ENCODE measurements at regions of chr12 and their contacts with region 1.

Region 1: DNA sequence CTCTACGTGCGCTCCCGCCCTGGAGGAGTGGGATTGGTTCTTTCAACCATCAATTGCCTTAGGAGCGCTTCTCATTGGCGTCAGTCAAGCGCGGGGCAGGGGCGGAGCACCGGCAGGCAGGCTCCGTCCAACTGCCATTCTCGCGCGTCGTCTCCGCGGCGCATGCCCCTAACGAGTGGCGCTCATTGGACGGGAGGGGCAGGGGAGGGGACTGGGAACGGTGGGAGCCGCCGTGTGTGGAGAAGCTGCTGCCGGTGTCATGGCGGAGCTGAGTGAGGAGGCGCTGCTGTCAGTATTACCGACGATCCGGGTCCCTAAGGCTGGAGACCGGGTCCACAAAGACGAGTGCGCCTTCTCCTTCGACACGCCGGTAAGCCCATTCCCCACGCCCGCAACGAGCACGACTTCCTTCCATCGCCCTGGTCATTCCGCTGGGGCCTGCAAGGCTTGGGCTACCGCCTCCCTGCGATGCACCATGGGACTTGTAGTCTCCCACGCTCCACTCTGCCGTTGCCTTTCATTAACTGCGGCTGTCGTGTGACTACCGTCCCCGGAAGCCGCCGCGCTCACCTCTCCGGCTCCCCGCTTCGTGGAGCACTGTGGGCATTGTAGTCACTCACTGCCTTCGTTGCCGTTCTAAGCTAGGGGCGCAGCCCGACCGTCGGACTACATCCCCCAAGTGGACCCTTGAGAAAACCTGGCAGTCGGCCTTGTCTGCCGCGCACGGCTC is at the start of gene USP5:
- DNase-seq: peak; percentile 91
- ATAC-seq: peak; percentile 78
- H3K4me3 Mint-ChIP-seq: peak within 1 kb of the TSS; percentile 100
- H3K27ac Mint-ChIP-seq: peak within 1 kb of the TSS; percentile 99
- H3K4me1 Mint-ChIP-seq: peaks cover 30% of the 10 kb centered on the region
- H3K27me3 Mint-ChIP-seq: no peaks in the 10 kb centered on the region
- CTCF ChIP-seq: no peak
- total RNA-seq, gene USP5: 108 and 110 TPM in 2 replicates

Region 2: DNA sequence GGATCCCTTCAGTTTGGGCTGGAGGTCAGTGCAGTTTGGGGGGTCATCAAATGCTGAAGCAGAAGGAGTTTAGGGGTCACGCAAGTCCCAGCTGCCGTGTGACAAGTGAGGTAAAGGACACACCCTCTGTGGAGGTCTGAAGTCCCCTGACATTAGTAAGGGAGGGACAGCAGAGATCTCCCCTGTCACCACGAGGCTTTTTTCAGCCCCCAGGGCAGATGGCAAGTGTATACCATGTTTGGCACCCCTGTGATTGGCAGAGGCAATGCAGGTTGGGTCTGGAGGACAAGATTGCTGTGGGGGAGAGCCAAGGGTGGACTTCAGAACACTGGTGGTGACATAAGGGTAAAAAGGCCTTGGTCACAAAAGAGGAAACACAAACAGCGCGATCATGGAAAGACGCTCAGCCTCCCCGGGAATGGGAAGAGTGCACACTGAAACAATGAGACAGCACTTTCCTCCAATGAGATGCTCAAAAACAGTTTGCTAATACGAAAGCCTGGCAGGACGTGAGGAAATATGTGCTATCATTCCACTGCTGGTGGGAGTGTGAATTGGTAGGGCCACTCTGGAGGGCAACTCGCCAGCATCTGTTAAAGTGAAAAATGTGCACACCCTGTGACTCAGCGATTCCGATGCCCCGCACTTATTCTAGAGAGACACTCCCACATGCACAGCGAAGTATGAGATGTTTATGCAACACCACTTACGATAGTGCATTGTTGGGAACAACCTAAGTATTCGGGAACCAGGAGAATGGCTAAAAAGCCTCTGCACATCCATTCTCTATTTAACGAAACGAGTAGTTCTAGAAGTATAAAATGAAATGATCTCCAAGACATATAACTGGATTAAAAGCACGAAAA is 421.7 kb before region 1 on chr12:
- CTCF ChIA-PET with region 1: no interaction called
- POLR2A ChIA-PET with region 1: no interaction called
- intact Hi-C with region 1: loop called (anchors 5 kb)
- DNase-seq: no peak
- ATAC-seq: no peak
- H3K4me3 Mint-ChIP-seq: peak overlapping the region; percentile 58
- H3K27ac Mint-ChIP-seq: peak overlapping the region; percentile 65
- H3K4me1 Mint-ChIP-seq: peaks cover 72% of the 10 kb centered on the region
- H3K27me3 Mint-ChIP-seq: no peaks in the 10 kb centered on the region
- CTCF ChIP-seq: no peak

Region 3: DNA sequence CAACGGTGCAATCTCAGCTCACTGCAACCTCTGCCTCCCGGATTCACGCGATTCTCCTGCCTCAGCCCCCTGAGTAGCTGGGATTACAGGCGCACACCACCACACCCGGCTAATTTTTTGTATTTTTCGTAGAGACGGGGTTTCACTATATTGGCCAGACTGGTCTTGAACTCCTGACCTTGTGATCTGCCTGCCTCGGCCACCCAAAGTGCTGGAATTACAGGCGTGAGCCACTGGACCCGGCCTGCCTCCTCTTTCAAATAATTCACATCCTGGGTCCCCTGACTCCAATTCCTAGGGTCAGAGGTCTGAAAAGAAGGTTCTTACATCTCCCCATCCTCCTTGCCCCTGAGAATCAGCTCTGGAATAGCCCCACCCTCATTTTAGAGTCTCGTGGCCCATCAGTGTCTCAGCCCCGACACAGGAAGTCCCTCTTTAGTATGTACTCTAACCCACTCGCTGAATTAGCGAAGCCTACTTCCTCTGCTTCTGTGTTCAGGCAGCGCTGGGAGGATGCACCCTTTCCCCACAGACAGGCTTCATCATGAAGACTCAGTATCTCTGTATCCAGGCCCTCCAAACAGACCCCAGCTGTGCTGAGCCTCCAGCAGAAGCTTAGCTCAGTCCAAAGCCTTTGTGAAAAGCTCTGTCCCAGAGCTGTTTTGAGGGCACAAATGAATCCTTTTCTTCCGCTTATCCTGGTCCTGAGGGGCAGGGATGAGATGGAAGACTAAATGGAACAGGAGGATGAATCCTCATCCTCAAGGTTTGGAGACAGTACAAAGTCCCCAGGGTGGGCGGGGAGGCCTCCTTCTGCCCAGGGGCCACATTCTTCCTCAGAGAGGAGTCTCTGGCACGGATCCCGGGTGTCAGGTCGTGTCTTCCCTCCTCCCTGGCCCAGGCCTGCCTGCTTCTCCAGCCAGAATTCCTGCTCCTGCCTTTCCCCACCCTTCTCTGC is 219.8 kb before region 1 on chr12:
- CTCF ChIA-PET with region 1: no interaction called
- POLR2A ChIA-PET with region 1: interaction called, 9 read pairs
- intact Hi-C with region 1: loop called (anchors 5 kb)
- DNase-seq: peak; percentile 51
- ATAC-seq: peak; percentile 53
- H3K4me3 Mint-ChIP-seq: peak overlapping the region; percentile 86
- H3K27ac Mint-ChIP-seq: peak overlapping the region; percentile 98
- H3K4me1 Mint-ChIP-seq: peaks cover 84% of the 10 kb centered on the region
- H3K27me3 Mint-ChIP-seq: no peaks in the 10 kb centered on the region
- CTCF ChIP-seq: no peak

Region 4: DNA sequence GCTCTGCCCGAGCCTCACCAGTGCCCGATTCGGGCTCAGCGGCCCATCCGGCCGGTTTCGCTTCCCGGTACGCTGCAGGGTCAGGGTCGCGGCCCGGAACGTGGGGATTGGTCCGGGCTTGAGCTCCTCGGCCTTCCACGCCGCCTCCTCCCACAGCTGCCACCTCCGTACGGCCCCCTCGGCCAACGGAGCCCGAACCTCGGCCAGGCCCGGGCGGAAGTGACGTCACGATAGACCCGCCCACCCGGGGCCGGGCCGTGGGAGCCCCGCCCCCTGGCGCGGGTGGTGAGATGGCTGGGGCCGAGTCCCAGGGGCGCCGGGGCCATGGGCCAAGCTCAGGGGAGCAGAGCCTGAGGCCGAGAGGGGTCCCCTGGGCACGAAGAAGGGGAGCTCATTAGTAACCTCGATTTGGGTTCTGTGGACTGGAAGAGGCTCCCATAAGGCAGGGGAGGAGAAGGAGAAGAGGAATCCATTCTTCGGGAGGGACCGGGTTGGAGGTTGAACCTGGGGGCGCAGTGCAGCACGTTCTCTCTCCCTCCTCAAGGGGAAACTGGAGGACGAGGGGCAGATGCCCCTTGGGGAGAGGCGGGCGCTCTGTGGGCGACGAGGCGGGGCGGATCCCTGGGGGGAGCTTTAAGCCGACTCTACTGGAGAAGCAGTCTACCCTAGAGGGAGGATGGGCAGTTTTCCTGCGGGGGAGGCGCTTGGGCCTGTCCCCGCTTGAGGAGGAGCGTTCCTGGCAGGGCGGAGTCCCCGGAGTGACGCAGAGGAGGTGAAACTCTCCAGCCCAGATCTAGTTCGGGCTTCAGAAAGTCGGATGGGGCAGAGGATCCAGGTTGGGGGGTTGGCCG is 98.9 kb before region 1 on chr12 and contains the start of gene MLF2:
- CTCF ChIA-PET with region 1: interaction called, 4 read pairs
- POLR2A ChIA-PET with region 1: interaction called, 38 read pairs
- intact Hi-C with region 1: loop called (anchors 1 kb)
- DNase-seq: peak; percentile 98
- ATAC-seq: peak; percentile 91
- H3K4me3 Mint-ChIP-seq: peak within 1 kb of the TSS; percentile 93
- H3K27ac Mint-ChIP-seq: peak within 1 kb of the TSS; percentile 99
- H3K4me1 Mint-ChIP-seq: peaks cover 16% of the 10 kb centered on the region
- H3K27me3 Mint-ChIP-seq: no peaks in the 10 kb centered on the region
- CTCF ChIP-seq: peak; percentile 76
- total RNA-seq, gene MLF2: 102 and 105 TPM in 2 replicates

Region 5: DNA sequence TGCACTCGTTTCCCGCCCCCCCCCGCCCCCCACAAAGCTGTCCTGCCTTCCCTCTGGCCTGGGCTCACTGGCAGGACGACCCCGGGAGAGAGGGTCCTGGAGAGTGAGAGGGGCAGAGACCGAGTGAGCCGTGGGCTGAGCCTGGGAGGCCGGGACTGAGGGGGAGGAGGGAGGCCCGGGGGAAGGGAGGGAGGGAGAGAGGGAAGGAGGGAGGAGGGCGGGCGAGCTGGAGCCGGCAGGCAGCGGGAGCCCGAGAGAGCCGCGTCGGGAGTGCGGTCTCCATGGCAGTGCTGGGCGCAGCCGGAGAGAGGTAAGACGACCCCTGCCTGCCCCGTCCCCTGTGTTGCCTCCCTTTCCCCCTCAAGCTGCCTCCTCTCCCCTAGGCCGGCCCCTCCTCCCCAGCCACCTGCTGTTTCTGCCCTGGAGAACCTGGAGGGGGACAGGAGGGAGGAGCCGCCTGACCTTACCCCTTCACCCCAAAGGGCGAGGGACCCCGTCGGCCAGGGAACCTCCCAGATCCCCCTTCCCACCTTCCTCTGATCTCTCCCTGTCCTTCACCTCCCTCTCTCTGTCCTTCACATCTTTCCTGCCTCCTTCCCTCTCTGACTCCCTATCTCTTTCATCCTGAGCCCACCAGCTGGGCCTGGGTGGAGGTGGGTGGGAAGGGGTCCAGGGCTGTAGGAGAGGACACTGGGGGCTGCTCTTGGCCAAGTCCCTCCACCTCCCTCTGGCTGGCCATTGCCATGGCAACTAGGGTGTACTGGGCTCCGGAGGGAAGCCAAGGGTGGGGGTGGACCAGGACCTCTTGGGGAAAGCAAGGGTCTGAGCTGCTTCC is 30.3 kb before region 1 on chr12 and contains the start of gene GPR162:
- CTCF ChIA-PET with region 1: no interaction called
- POLR2A ChIA-PET with region 1: no interaction called
- intact Hi-C with region 1: no loop called
- DNase-seq: no peak
- ATAC-seq: no peak
- H3K4me3 Mint-ChIP-seq: no peak within 1 kb of the TSS
- H3K27ac Mint-ChIP-seq: no peak within 1 kb of the TSS
- H3K4me1 Mint-ChIP-seq: peaks cover 16% of the 10 kb centered on the region
- H3K27me3 Mint-ChIP-seq: peaks cover 54% of the 10 kb centered on the region
- CTCF ChIP-seq: no peak
- total RNA-seq, gene GPR162: not detected in 2 replicates

Region 6: DNA sequence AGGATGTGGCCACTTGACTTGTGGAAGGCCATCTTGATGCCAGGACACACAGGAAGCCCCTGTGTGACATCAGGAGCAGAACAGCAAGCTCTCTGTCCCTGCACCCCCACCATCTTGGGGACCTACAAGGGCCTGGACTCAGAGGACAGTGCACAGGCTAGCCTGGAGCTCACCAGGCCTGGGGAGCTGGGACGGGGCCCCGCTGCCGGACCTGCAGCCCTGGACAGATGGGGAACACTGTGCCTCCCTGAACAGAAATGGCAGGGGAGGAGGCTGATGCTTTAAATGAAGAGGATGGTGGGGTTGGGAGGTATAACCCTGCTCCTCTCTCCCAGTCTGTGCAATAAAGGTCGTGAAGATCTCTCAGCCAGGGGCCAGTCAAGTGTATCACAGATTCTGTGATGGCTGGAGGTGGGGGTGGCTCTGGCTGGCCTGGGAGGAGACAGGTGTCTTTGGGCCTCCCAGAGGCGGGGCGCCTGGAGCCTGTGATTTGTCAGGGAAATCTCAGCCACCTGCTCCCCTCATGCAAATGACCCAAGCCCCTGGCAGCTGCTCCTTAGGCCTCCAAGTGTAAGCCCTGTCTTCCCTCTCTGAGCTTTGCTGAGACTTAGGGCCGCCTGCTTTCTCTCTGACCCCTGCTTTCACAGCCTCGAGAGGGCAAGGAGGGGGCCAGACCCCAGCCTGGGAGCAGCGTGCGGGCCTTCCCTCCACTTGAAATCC is 12.4 kb before region 1 on chr12:
- CTCF ChIA-PET with region 1: interaction called, 12 read pairs
- POLR2A ChIA-PET with region 1: interaction called, 15 read pairs
- intact Hi-C with region 1: no loop called
- DNase-seq: no peak
- ATAC-seq: peak; percentile 78
- H3K4me3 Mint-ChIP-seq: no peak overlapping the region
- H3K27ac Mint-ChIP-seq: peak overlapping the region; percentile 41
- H3K4me1 Mint-ChIP-seq: peaks cover 14% of the 10 kb centered on the region
- H3K27me3 Mint-ChIP-seq: peaks cover 2% of the 10 kb centered on the region
- CTCF ChIP-seq: no peak

Region 7: GRCh38 chr12:6904280-6905278 is 52.5 kb after region 1 on chr12 and contains the start of gene LRRC23:
- CTCF ChIA-PET with region 1: no interaction called
- POLR2A ChIA-PET with region 1: interaction called, 4 read pairs
- intact Hi-C with region 1: loop called (anchors 1 kb)
- DNase-seq: peak; percentile 87
- ATAC-seq: peak; percentile 98
- H3K4me3 Mint-ChIP-seq: no peak within 1 kb of the TSS
- H3K27ac Mint-ChIP-seq: no peak within 1 kb of the TSS
- H3K4me1 Mint-ChIP-seq: peaks cover 6% of the 10 kb centered on the region
- H3K27me3 Mint-ChIP-seq: no peaks in the 10 kb centered on the region
- CTCF ChIP-seq: no peak
- total RNA-seq, gene LRRC23: 7.7 and 8.8 TPM in 2 replicates

Region 8: GRCh38 chr12:7018350-7019042 is 166.4 kb after region 1 on chr12 and contains the start of gene LPCAT3:
- CTCF ChIA-PET with region 1: no interaction called
- POLR2A ChIA-PET with region 1: no interaction called
- intact Hi-C with region 1: loop called (anchors 1 kb)
- DNase-seq: peak; percentile 94
- ATAC-seq: peak; percentile 96
- H3K4me3 Mint-ChIP-seq: peak within 1 kb of the TSS; percentile 87
- H3K27ac Mint-ChIP-seq: peak within 1 kb of the TSS; percentile 77
- H3K4me1 Mint-ChIP-seq: peaks cover 20% of the 10 kb centered on the region
- H3K27me3 Mint-ChIP-seq: no peaks in the 10 kb centered on the region
- CTCF ChIP-seq: no peak
- total RNA-seq, gene LPCAT3: 19.3 and 21.3 TPM in 2 replicates

Region 9: DNA sequence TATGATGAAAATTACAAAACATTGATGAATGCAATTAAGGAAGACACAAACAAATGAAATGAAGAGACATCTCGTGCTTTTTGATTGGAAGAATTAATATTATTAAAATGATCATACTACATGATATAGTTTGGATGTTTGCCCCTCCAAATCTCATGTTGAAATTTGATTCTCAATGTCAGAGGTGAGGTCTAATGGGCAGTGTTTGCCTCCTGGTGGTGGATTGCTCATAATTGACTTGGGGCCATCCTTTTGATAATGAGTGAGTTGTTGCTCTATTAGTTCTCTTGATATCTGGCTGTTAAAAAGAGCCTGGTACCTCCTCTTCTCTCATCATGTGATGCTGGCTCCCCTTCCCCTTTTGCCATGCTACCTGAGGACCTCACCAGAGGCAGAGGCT is 535.2 kb after region 1 on chr12:
- CTCF ChIA-PET with region 1: no interaction called
- POLR2A ChIA-PET with region 1: no interaction called
- intact Hi-C with region 1: no loop called
- DNase-seq: no peak
- ATAC-seq: no peak
- H3K4me3 Mint-ChIP-seq: no peak overlapping the region
- H3K27ac Mint-ChIP-seq: no peak overlapping the region
- H3K4me1 Mint-ChIP-seq: no peaks in the 10 kb centered on the region
- H3K27me3 Mint-ChIP-seq: peaks cover 7% of the 10 kb centered on the region
- CTCF ChIP-seq: no peak